Heart left ventricle (tissue), 16 donors: ENCODE measurements at regions of chr1 and their contacts with region 1.

Region 1: DNA sequence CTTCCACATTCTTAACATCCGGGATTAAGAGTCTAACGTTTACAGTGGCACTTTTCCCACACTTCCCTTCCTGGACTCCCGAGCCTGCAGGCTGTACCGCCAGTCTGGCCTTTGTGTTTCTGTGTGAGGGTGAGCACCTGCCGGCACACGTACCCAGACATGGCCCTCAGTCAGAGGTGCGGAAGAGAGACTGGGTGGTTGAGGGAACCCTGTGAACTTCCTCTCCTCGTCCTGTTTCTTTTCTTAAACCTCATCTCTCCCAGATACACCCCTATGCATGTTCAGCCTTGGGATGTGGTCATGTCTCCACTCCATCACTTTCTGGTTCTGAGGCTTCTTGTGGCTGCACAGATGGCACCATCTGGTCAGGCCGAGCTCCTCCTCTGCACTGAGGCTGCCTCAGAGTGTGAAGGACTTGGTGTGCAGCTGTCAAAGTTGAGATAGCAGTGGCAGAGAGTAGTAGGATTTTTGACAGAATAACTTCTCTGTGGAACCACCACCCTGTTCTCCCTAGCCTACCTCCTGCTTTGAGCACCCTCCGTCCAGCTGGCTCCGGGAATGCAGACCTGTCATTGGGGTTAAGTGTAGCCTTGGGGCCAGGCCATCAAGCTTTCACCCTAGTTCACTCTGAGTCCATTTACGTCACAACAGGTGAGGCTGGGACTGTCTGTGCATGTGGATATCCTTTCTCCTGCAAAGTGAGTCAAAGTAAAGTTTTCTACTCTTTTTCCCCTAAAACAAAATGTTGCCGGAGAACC is 31.4 kb downstream of the VASH2 start:
- DNase-seq: peak in 2 of 5 donors; percentile 46 to 48
- ATAC-seq: peak in 3 of 4 donors; percentile 21 to 63 (median 44)
- H3K4me3 ChIP-seq: no peak overlapping the region
- H3K27ac ChIP-seq: peak overlapping the region in 6 of 12 donors; percentile 13 to 55 (median 33)
- H3K4me1 ChIP-seq: peaks cover 0 to 37% (median 26%) of the 10 kb centered on the region in 12 donors
- H3K27me3 ChIP-seq: no peaks in the 10 kb centered on the region
- CTCF ChIP-seq: no peak
- POLR2A ChIP-seq: no peak

Region 2: DNA sequence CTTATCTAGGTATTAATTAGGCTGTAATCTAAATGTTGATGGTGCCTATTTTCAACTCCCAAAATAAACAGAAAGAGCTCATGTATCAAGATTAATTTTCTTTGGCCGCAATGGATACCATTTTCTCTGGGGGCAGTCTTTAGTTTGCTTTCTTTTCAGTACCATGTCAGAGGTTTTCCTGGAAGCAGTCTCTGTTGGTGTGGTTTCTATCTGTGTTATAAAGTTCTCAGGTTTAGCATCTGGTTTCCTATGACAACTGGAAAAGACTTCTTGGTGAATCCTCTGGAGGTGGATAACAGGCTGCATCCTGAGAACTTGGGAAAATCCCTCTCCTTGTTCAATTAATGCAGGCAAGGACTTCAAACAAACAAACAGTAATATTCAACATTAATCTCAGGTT is 243.4 kb before region 1 on chr1:
- intact Hi-C with region 1: no loop called
- DNase-seq: no peak
- ATAC-seq: no peak
- H3K4me3 ChIP-seq: no peak overlapping the region
- H3K27ac ChIP-seq: no peak overlapping the region
- H3K4me1 ChIP-seq: no peaks in the 10 kb centered on the region
- H3K27me3 ChIP-seq: no peaks in the 10 kb centered on the region
- CTCF ChIP-seq: no peak
- POLR2A ChIP-seq: no peak

Region 3: GRCh38 chr1:212884592-212884991 is 97.2 kb before region 1 on chr1:
- intact Hi-C with region 1: no loop called
- DNase-seq: no peak
- ATAC-seq: no peak
- H3K4me3 ChIP-seq: no peak overlapping the region
- H3K27ac ChIP-seq: no peak overlapping the region
- H3K4me1 ChIP-seq: no peaks in the 10 kb centered on the region
- H3K27me3 ChIP-seq: no peaks in the 10 kb centered on the region
- CTCF ChIP-seq: no peak
- POLR2A ChIP-seq: no peak

Region 4: DNA sequence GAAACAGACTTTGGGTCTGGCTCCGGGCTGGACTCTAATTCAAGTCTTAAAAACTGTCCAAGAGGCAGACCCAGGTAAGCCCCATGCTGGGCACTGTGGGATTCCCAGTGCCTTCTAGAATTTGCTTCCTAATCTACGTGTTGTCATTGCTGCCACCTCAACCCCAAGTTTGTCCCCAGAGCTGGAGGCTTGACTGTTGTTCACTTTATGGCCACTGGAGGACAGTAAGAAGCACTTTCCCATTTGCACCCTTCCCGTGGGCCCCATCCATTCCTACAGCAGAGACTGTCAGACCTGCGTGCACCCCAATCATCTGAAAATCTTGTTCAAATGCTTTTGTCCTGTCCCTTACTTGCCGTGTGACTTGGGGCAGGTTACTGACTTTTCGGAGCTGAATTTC is 60.9 kb before region 1 on chr1:
- intact Hi-C with region 1: loop called in 1 of 10 experiments (anchors 5 kb)
- DNase-seq: no peak
- ATAC-seq: no peak
- H3K4me3 ChIP-seq: no peak overlapping the region
- H3K27ac ChIP-seq: no peak overlapping the region
- H3K4me1 ChIP-seq: peaks cover 0 to 13% (median 0%) of the 10 kb centered on the region in 12 donors
- H3K27me3 ChIP-seq: peaks cover 0 to 9% (median 0%) of the 10 kb centered on the region in 9 donors
- CTCF ChIP-seq: peak in 6 of 12 donors; percentile 11 to 22 (median 16)
- POLR2A ChIP-seq: no peak

Region 5: DNA sequence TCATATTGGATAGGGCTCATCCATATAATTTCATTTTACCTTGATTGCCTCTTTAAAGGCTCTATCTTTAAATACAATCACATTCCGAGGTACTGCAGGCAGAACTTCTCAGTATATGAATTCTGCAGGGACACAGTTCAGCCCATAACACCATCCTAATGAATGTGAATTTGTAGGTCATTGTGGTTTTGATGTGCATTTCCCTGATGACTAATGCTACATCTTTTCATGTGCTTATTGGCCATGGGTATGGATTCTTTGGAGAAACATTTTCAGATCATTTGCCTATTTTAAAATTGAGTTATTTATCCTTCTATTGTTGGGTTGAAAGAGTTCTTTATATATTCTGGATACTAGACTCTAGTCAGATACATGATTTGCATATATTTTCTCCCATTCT is 59.7 kb after region 1 on chr1:
- intact Hi-C with region 1: no loop called
- DNase-seq: no peak
- ATAC-seq: no peak
- H3K4me3 ChIP-seq: no peak overlapping the region
- H3K27ac ChIP-seq: no peak overlapping the region
- H3K4me1 ChIP-seq: no peaks in the 10 kb centered on the region
- H3K27me3 ChIP-seq: peaks cover 0 to 38% (median 3%) of the 10 kb centered on the region in 9 donors
- CTCF ChIP-seq: no peak
- POLR2A ChIP-seq: no peak